Right ventricle myocardium superior (tissue), 1 donor: ENCODE measurements at regions of chr11 and their contacts with region 1.

Region 1: DNA sequence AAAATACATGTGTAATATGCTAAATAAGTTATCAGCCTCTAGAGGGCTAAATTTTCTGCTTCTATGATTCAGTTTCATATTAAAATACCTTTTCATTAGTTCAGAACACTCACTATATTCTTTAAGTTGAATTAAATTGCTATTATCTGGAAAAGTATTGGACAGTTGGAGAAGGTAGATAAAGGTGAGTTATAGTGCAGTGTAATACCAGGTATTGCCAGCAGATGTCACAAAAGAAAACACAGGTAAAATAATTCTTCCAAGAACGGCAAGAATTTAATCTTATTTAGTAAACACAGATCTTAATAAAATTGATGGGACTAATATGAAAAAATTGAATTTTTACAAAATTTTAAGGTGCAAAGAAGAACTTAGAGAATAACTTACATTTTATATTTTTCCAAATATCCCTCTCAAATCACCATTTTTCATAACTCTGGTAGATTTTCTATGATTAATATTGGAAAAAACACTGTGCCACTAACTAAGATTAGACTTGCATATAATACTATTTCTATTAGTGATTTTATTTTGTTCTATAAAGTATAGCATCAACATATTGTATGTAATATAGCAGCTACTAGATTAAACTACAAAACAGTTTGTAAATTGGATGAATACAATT is 1.7 kb upstream of the LRRC4C start:
- DNase-seq: no peak
- ATAC-seq: no peak

Region 2: GRCh38 chr11:41400819-41401382 is 60.3 kb before region 1 on chr11:
- intact Hi-C with region 1: no loop called
- DNase-seq: no peak
- ATAC-seq: no peak

Region 3: GRCh38 chr11:41533761-41534160 is 72.6 kb after region 1 on chr11:
- intact Hi-C with region 1: no loop called
- DNase-seq: no peak
- ATAC-seq: no peak

Region 4: DNA sequence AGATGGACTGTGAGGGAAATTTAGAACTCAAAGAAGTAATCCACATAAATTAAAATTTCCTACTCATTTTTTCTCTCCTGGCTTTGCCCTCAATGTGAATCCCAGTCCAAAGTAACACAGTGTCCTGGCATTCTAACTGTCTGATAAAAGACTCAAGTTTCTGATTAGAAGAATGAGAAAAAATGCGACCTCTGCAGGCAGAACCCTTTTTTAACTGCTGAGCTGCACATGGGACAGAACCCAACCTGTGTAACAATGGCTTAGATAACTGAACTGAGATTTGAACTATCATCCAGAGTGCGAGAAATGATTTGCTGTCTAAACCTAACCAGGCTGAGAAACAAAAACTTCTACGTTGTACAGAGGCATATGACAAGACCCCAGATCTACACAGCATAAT is 383.9 kb after region 1 on chr11:
- intact Hi-C with region 1: no loop called
- DNase-seq: no peak
- ATAC-seq: no peak

Region 5: GRCh38 chr11:43282607-43283440 is 1821.7 kb after region 1 on chr11:
- intact Hi-C with region 1: loop called (anchors 5 kb)
- DNase-seq: peak; percentile 49
- ATAC-seq: peak; percentile 58